Activated CD8-positive, alpha-beta T cell treated with anti-CD3 and anti-CD28 coated beads for 36 hours (primary cell): ENCODE measurements at regions of chr7 and their contacts with region 1.

Region 1: DNA sequence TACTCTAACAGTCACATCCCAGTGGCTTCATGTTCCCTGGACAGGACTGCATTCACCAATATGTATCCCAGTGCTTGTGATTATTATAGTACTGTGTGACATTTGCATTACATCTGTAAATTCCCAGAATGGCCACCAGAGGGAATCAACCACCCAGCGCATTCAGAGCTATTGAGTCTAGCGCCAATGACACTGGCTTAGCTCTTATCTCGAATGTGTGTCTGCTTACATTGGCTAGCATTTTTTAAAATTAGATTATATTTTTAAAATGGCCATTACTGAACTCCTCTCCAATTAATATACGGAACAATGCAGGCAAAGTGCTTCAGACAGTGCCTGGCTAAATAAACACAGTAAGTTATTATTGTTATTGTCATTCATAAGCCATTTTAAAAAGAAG is 36.3 kb downstream of the TRIL start:
- DNase-seq: peak; percentile 53
- ATAC-seq: peak; percentile 85
- H3K4me3 Mint-ChIP-seq: no peak overlapping the region
- H3K27ac Mint-ChIP-seq: no peak overlapping the region
- H3K4me1 Mint-ChIP-seq: peaks cover 13% of the 10 kb centered on the region
- H3K27me3 Mint-ChIP-seq: peaks cover 5% of the 10 kb centered on the region
- CTCF ChIP-seq: peak; percentile 74

Region 2: DNA sequence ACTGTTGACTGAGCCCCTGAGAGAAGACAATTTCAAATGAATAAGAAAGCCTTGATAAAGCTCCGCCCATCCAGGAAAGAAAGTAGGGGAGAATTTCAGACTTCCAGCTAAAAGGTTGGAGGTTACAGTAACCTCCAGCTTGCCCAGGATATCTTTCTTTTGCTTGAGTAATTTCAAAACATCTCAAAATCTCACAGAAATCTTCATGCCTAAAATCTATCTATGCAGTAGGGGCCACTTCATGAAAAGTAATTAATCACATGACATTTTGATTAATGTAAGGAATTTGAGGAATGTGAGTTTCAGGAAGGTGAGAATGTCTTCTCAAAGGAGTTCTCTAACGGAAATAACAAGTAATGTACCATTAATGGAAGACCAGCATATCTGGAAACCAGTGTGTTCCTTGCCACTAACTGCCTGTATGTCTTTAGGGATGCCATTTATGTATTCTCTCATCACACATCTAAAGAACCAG is 12.1 kb after region 1 on chr7:
- CTCF ChIA-PET with region 1: interaction called, 43 read pairs
- POLR2A ChIA-PET with region 1: no interaction called
- intact Hi-C with region 1: no loop called
- DNase-seq: no peak
- ATAC-seq: no peak
- H3K4me3 Mint-ChIP-seq: no peak overlapping the region
- H3K27ac Mint-ChIP-seq: no peak overlapping the region
- H3K4me1 Mint-ChIP-seq: no peaks in the 10 kb centered on the region
- H3K27me3 Mint-ChIP-seq: peaks cover 18% of the 10 kb centered on the region
- CTCF ChIP-seq: no peak

Region 3: GRCh38 chr7:29091715-29092114 is 169.9 kb after region 1 on chr7:
- CTCF ChIA-PET with region 1: interaction called, 331 read pairs
- POLR2A ChIA-PET with region 1: no interaction called
- intact Hi-C with region 1: no loop called
- DNase-seq: peak; percentile 7
- ATAC-seq: peak; percentile 86
- H3K4me3 Mint-ChIP-seq: peak overlapping the region; percentile 59
- H3K27ac Mint-ChIP-seq: no peak overlapping the region
- H3K4me1 Mint-ChIP-seq: peaks cover 9% of the 10 kb centered on the region
- H3K27me3 Mint-ChIP-seq: peaks cover 7% of the 10 kb centered on the region
- CTCF ChIP-seq: no peak

Region 4: GRCh38 chr7:29119538-29120199 is 197.8 kb after region 1 on chr7:
- CTCF ChIA-PET with region 1: interaction called, 15 read pairs
- POLR2A ChIA-PET with region 1: no interaction called
- intact Hi-C with region 1: no loop called
- DNase-seq: no peak
- ATAC-seq: no peak
- H3K4me3 Mint-ChIP-seq: no peak overlapping the region
- H3K27ac Mint-ChIP-seq: no peak overlapping the region
- H3K4me1 Mint-ChIP-seq: no peaks in the 10 kb centered on the region
- H3K27me3 Mint-ChIP-seq: peaks cover 8% of the 10 kb centered on the region
- CTCF ChIP-seq: no peak

Region 5: DNA sequence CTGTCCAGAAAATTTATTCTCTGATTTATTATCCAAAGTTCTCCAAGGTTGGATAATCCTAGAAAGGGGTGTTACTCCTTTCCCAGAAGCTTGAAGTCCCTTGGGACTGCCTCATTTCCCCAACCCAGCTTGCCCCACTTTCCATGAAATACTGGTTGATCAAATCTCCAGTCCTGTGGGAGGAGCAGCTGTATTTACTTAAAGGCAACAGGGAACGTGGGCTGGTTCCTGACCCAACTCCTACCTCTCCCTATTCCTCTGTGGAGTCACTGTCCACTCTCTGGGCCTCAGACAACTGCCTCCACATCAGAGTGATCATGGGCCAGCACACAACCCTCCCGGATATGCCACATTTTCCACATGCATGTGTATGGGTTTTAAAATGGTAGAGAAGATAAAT is 475.6 kb after region 1 on chr7:
- CTCF ChIA-PET with region 1: interaction called, 11 read pairs
- POLR2A ChIA-PET with region 1: no interaction called
- intact Hi-C with region 1: no loop called
- DNase-seq: no peak
- ATAC-seq: no peak
- H3K4me3 Mint-ChIP-seq: no peak overlapping the region
- H3K27ac Mint-ChIP-seq: no peak overlapping the region
- H3K4me1 Mint-ChIP-seq: peaks cover 4% of the 10 kb centered on the region
- H3K27me3 Mint-ChIP-seq: no peaks in the 10 kb centered on the region
- CTCF ChIP-seq: no peak